Posterior vena cava (tissue), 2 donors: ENCODE measurements at regions of chr18 and their contacts with region 1.

Region 1: GRCh38 chr18:22018366-22018765 is 151.0 kb upstream of the GATA6 start:
- DNase-seq: no peak

Region 2: DNA sequence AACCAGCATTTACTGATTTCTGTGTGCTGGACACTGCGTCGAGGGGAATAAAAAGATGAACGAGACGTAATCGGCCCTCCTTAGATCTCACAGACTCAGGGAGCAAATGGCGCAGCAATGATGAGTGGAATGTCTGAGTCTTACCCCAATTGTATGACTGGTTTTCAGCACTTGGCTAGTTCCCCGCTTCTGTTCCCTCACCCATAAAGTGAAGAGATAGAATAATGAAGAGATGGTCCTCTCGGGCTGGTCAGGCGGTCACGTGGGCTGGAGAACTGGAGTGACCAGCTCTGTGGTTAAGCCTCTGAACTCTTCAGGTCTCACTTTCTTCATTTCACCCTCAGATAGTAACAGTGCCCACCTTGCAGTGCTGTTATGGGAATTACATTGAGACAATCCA is 133.8 kb after region 1 on chr18:
- intact Hi-C with region 1: loop called in 1 of 2 experiments (anchors 10 kb)
- DNase-seq: no peak

Region 3: DNA sequence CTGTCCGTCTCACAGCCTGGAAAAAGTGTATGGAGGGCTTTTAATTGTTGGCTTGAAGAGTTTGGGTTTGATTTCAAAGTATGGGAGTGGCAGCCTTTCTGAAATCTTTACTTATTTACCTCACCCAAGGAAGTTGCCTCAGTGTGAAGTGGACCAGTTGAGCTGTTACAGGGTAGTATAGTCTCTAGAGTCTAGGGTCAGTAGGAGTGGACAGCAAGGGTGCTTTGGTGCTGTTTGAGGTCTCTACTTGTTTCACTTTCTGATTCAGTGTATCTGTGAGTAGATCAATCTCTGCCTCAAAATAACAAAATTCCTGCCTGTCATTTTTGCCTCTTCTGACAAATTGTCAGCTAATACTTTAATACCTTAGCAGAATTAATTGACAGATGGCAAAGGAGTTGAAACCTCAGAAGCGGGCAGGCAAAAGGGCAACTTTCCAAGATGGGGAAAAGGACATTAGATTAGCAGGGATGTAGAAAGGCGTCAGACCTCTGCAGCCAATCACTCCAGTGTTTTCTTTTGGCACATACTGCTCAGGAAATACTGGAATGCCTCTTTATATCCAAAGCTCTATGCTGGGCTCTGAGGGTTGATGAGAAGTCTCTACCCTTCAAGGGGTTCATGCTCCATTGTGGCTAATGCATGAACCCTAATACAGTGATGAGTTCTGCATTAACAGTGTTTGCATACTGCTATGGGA is 1440.6 kb after region 1 on chr18:
- intact Hi-C with region 1: no loop called
- DNase-seq: no peak

Region 4: GRCh38 chr18:23719634-23720201 is 1701.4 kb after region 1 on chr18:
- intact Hi-C with region 1: no loop called
- DNase-seq: no peak